Activated CD4-positive, alpha-beta memory T cell treated with anti-CD3 and anti-CD28 coated beads, Interleukin-2, amount 10 ng/mL, durations not matched to agents 7 days and 5 days (primary cell): ENCODE measurements at regions of chr7 and their contacts with region 1.

Region 1: GRCh38 chr7:144127703-144128334 is 4.8 kb downstream of the OR2A14 start:
- DNase-seq: peak; percentile 86
- H3K4me3 Mint-ChIP-seq: no peak overlapping the region
- H3K27ac Mint-ChIP-seq: no peak overlapping the region
- H3K4me1 Mint-ChIP-seq: no peaks in the 10 kb centered on the region
- H3K27me3 Mint-ChIP-seq: peaks cover 4% of the 10 kb centered on the region

Region 2: GRCh38 chr7:143892527-143893300 is 235.1 kb before region 1 on chr7:
- CTCF ChIA-PET with region 1: interaction called, 11 read pairs
- POLR2A ChIA-PET with region 1: no interaction called
- DNase-seq: peak; percentile 27
- H3K4me3 Mint-ChIP-seq: no peak overlapping the region
- H3K27ac Mint-ChIP-seq: no peak overlapping the region
- H3K4me1 Mint-ChIP-seq: peaks cover 14% of the 10 kb centered on the region
- H3K27me3 Mint-ChIP-seq: peaks cover 3% of the 10 kb centered on the region

Region 3: GRCh38 chr7:143901668-143902331 is 226.0 kb before region 1 on chr7 and contains the start of gene TCAF1:
- CTCF ChIA-PET with region 1: interaction called, 18 read pairs
- POLR2A ChIA-PET with region 1: no interaction called
- DNase-seq: peak; percentile 90
- H3K4me3 Mint-ChIP-seq: peak within 1 kb of the TSS; percentile 92
- H3K27ac Mint-ChIP-seq: peak within 1 kb of the TSS; percentile 73
- H3K4me1 Mint-ChIP-seq: peaks cover 25% of the 10 kb centered on the region
- H3K27me3 Mint-ChIP-seq: no peaks in the 10 kb centered on the region
- total RNA-seq, gene TCAF1: 24.7 to 25.2 TPM

Region 4: DNA sequence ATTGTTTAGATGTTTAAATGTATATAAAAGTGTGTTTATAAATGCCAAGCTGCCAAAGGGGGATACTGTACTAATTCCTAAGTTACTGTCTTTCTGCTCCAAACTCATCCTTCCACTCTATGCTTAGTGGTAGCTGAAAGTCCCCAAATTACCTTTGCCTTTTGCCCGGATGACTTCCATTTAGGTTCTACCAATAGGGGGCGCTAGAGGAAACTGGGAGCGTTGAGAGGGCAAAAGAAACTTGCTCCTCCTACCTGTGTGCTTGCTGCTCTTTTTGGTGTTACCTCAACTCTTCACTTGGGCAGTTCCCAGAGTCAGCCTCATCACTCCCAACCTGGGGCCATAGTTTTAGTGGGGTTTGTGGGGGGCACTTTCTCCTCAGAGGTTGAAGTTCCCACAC is 64.1 kb before region 1 on chr7:
- CTCF ChIA-PET with region 1: interaction called, 12 read pairs
- POLR2A ChIA-PET with region 1: no interaction called
- DNase-seq: no peak
- H3K4me3 Mint-ChIP-seq: no peak overlapping the region
- H3K27ac Mint-ChIP-seq: no peak overlapping the region
- H3K4me1 Mint-ChIP-seq: no peaks in the 10 kb centered on the region
- H3K27me3 Mint-ChIP-seq: peaks cover 14% of the 10 kb centered on the region

Region 5: DNA sequence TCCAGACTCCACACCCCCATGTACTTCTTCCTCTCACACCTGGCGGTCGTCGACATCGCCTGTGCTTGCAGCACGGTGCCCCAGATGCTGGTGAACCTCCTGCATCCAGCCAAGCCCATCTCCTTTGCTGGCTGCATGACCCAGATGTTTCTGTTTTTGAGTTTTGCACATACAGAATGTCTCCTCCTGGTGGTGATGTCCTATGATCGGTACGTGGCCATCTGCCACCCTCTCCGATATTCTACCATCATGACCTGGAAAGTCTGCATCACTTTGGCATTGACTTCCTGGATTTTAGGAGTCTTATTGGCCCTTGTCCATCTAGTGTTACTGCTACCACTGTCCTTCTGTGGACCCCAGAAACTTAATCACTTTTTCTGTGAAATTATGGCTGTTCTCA is 53.4 kb before region 1 on chr7:
- CTCF ChIA-PET with region 1: no interaction called
- POLR2A ChIA-PET with region 1: no interaction called
- DNase-seq: no peak
- H3K4me3 Mint-ChIP-seq: no peak overlapping the region
- H3K27ac Mint-ChIP-seq: no peak overlapping the region
- H3K4me1 Mint-ChIP-seq: no peaks in the 10 kb centered on the region
- H3K27me3 Mint-ChIP-seq: peaks cover 11% of the 10 kb centered on the region